ENCODE measurements at regions of chr1 and their contacts with region 1.

Region 1: GRCh38 chr1:183689770-183690204 is 36.7 kb upstream of the APOBEC4 start:
- DNase-seq: no peak
- ATAC-seq: no peak

Region 2: GRCh38 chr1:183646776-183647175 is 43.0 kb before region 1 on chr1:
- intact Hi-C with region 1: loop called in 1 of 2 experiments (anchors 10 kb)
- DNase-seq: no peak
- ATAC-seq: no peak